Activated B cell treated with CpG ODN at 0.5 μM for 24 hours (primary cell): ENCODE measurements at regions of chr1 and their contacts with region 1.

Region 1: DNA sequence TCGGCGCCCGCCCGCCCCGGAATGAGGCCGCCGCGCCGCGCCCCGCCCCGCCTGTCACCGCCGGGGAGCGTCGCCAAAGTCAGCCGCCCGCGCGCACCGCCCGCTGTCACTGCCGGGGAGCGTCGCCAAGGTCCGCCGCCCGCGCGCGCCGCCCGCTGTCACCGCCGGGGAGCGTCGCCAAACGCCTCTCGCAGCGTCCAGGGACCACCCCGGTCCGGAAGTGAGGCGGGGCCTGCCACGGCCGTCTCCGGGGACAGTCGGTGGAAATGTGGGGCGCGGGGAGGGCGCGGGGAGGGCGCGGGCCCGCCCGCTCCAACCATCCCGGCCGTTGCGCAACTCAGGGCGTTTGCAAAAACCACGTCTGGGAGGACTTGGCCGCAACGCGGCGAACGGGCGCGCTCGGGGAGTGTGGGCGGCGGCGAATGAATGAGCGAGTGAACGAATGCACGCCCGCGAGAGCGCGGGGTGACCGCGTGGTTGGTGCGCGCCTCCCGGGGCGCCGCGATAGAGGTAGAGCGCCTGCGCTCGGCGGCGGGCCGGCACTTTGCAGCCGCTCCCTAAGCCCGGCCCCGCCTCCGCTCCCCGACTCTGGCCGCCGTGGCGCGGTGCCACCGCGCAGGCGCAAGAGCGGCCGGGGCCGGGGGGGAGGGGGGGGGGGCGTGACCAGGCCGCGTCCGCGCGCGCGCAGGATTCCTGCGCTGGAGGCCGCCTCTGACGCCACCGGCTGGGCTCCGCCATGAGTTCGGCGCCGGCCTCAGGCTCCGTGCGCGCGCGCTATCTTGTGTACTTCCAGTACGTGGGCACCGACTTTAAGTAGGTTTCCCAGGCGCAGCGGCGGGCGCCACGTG is at the starts of genes ACAP3 and PUSL1:
- DNase-seq: peak; percentile 88
- ATAC-seq: peak; percentile 68
- H3K4me3 Mint-ChIP-seq: peak within 1 kb of the TSS; percentile 86
- H3K27ac Mint-ChIP-seq: peak within 1 kb of the TSS; percentile 87
- H3K4me1 Mint-ChIP-seq: peaks cover 38% of the 10 kb centered on the region
- H3K27me3 Mint-ChIP-seq: no peaks in the 10 kb centered on the region
- CTCF ChIP-seq: no peak
- total RNA-seq, gene ACAP3: 16.2 and 26.1 TPM in 2 replicates
- total RNA-seq, gene PUSL1: 11.9 and 12.6 TPM in 2 replicates

Region 2: DNA sequence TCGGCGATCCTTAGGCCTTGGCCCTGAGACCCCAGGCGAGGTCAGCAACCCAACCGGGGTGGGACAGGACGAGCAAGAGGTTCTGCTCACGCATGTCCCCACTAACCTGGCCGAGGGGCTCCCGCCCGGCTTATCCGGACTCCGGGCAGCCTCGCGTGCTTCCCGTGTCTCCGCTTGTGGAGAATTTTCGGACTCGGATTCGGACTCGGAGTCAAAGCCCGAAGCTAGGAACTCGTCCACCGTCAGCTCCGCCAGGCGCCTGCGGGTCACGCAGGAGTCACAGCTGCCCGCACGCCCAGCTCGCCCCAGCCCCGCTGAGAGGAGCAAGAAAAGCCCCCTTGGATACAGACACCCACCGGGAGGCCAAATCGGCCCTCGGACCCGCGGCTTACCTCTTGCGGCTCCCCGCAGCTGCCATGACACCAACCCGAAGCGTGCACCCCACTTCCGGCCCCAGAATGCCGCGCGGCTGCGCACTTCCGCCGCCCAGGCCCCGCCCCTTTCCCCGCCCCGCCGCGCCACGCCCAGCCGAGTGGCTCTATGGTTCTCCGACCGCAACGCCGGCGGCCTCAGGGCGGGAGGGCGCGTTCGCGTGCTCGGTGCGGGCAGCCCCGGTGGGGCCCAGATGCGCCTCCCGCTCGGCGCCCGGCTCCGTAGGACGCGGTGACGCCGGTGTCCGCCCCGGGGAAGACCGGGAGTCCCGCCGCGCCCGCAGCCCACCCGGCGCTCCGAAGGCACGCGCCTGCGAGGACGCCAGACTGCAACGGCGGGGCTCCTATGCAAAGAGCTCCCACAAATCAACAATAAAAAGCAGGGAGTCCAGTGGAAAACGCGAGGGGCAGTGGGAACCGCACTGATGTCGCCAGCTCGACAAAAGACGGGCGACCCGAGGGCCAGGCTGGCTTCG is 349.1 kb before region 1 on chr1 and contains the start of gene NOC2L:
- CTCF ChIA-PET with region 1: no interaction called
- POLR2A ChIA-PET with region 1: no interaction called
- intact Hi-C with region 1: loop called (anchors 1 kb)
- DNase-seq: peak; percentile 95
- ATAC-seq: peak; percentile 90
- H3K4me3 Mint-ChIP-seq: peak within 1 kb of the TSS; percentile 89
- H3K27ac Mint-ChIP-seq: peak within 1 kb of the TSS; percentile 56
- H3K4me1 Mint-ChIP-seq: peaks cover 28% of the 10 kb centered on the region
- H3K27me3 Mint-ChIP-seq: no peaks in the 10 kb centered on the region
- CTCF ChIP-seq: no peak
- total RNA-seq, gene NOC2L: 95.5 and 96.8 TPM in 2 replicates

Region 3: DNA sequence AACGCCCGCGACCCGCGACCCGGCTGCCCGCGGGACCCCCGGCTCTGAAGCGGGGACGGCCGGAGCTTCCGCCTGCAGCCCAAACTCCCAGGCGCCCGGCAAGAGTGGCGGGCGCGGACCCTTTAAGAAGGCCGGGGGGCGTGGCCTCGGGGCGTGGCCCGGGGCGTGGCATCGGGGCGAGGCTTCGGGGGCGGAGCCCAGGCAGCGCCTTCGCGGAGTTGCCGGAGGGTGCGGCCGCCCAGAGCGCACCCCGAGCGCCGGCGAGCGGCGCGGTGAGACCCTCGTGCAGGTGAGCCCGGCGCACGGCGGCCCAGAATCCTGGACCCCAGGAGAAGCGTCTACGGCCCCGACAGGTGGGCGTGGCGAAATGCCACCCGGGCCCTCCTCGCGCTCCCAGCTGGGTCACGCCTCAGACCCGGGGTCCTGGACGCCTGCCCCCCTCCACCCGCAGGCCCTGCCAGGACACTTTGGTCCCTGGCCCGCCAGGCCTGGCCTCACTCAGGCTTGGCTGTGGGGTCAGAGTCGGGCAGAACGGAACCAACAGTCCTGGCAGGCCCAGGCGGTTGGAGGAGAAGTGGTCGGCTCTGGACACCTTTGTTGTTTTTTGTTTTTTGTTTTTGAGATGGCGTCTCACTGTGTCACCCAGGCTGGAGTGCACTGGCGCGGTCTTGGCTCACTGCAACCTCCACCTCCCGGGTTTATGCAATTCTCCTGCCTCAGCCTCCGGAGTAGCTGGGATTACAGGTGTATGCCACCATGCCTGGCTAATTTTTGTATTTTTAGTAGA is 248.4 kb before region 1 on chr1:
- CTCF ChIA-PET with region 1: no interaction called
- POLR2A ChIA-PET with region 1: interaction called, 4 read pairs
- intact Hi-C with region 1: loop called (anchors 5 kb)
- DNase-seq: peak; percentile 97
- ATAC-seq: peak; percentile 59
- H3K4me3 Mint-ChIP-seq: peak overlapping the region; percentile 74
- H3K27ac Mint-ChIP-seq: peak overlapping the region; percentile 12
- H3K4me1 Mint-ChIP-seq: peaks cover 43% of the 10 kb centered on the region
- H3K27me3 Mint-ChIP-seq: peaks cover 18% of the 10 kb centered on the region
- CTCF ChIP-seq: no peak

Region 4: GRCh38 chr1:1231400-1232223 is 76.5 kb before region 1 on chr1 and contains the start of gene SDF4:
- CTCF ChIA-PET with region 1: no interaction called
- POLR2A ChIA-PET with region 1: no interaction called
- intact Hi-C with region 1: loop called (anchors 1 kb)
- DNase-seq: peak; percentile 91
- ATAC-seq: peak; percentile 94
- H3K4me3 Mint-ChIP-seq: peak within 1 kb of the TSS; percentile 92
- H3K27ac Mint-ChIP-seq: peak within 1 kb of the TSS; percentile 83
- H3K4me1 Mint-ChIP-seq: peaks cover 35% of the 10 kb centered on the region
- H3K27me3 Mint-ChIP-seq: no peaks in the 10 kb centered on the region
- CTCF ChIP-seq: no peak
- total RNA-seq, gene SDF4: 94.4 and 97.9 TPM in 2 replicates

Region 5: DNA sequence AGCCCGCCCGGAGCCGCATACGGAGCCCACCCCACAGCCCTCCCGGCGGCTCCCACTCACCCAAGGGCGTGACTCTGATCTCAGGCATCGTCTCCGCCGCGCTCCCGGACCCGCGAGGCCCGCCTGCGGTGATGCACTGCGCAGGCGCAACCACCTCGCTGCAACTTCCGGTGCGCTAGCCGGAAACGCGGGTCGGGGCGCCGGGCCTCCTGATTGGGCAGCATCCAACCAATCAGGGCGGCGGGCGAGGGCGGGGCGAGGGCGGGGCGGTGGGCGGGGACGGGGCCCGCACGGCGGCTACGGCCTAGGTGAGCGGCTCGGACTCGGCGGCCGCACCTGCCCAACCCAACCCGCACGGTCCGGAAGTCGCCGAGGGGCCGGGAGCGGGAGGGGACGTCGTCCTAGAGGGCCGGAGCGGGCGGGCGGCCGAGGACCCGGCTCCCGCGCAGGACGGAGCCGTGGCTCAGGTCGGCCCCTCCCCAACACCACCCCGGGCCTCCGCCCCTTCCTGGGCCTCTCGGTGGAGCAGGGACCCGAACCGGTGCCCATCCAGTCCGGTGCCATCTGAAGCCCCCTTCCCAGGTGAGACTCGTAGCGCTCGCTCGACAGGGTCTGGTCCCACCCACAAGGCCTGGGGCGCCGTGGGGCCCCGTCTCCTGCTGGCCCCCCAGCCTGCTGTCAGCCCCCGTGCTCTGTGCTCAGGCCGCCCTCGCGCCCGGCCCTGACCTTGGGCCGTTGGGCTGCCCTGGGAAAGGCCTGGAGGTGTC is 16.6 kb after region 1 on chr1 and contains the starts of genes CPTP and INTS11:
- CTCF ChIA-PET with region 1: no interaction called
- POLR2A ChIA-PET with region 1: no interaction called
- intact Hi-C with region 1: loop called (anchors 1 kb)
- DNase-seq: peak; percentile 91
- ATAC-seq: peak; percentile 87
- H3K4me3 Mint-ChIP-seq: peak within 1 kb of the TSS; percentile 90
- H3K27ac Mint-ChIP-seq: peak within 1 kb of the TSS; percentile 80
- H3K4me1 Mint-ChIP-seq: peaks cover 41% of the 10 kb centered on the region
- H3K27me3 Mint-ChIP-seq: no peaks in the 10 kb centered on the region
- CTCF ChIP-seq: no peak
- total RNA-seq, gene CPTP: 13.8 and 15.3 TPM in 2 replicates
- total RNA-seq, gene INTS11: 131 and 151 TPM in 2 replicates

Region 6: DNA sequence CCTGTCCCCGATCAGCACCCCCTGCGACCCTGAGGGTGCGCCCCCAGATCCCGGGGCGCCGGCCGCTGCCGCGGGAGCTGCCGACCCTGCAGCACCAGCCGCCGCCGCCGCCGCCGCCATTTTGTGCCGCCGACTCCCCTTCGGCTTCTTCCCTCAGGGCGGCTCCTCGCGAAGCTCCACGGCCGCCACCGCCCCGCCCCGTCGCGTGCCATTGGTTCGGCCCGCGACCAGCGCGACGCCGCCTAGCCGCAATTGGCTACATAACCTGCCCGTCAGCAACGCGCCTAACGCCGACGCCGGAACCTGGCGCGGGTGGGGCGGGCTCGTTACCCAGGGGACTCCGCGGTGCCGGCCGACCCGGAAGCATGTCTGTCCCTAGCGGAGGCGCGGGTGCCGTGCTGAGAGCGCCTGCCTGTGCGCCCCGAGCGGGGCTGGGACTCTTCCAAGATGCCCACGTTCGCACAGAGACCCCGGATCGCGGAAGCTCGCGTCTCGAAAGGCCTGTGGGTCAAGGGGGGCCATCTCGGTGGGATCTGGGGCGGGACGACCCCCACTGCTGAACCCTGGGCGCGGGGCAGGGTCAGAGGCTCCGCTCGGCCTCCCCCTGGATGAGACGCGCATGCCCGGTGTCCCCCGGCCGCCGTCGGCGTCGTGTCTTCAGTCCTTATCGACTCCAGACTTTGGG is 91.2 kb after region 1 on chr1 and contains the start of gene CCNL2:
- CTCF ChIA-PET with region 1: no interaction called
- POLR2A ChIA-PET with region 1: no interaction called
- intact Hi-C with region 1: loop called (anchors 1 kb)
- DNase-seq: peak; percentile 98
- ATAC-seq: peak; percentile 96
- H3K4me3 Mint-ChIP-seq: peak within 1 kb of the TSS; percentile 92
- H3K27ac Mint-ChIP-seq: peak within 1 kb of the TSS; percentile 86
- H3K4me1 Mint-ChIP-seq: peaks cover 55% of the 10 kb centered on the region
- H3K27me3 Mint-ChIP-seq: no peaks in the 10 kb centered on the region
- CTCF ChIP-seq: no peak
- total RNA-seq, gene CCNL2: 188 and 225 TPM in 2 replicates

Region 7: GRCh38 chr1:1471389-1472052 is 163.4 kb after region 1 on chr1 and contains the start of gene ATAD3B:
- CTCF ChIA-PET with region 1: no interaction called
- POLR2A ChIA-PET with region 1: no interaction called
- intact Hi-C with region 1: no loop called
- DNase-seq: peak; percentile 84
- ATAC-seq: peak; percentile 95
- H3K4me3 Mint-ChIP-seq: peak within 1 kb of the TSS; percentile 90
- H3K27ac Mint-ChIP-seq: peak within 1 kb of the TSS; percentile 82
- H3K4me1 Mint-ChIP-seq: peaks cover 25% of the 10 kb centered on the region
- H3K27me3 Mint-ChIP-seq: no peaks in the 10 kb centered on the region
- CTCF ChIP-seq: no peak
- total RNA-seq, gene ATAD3B: 47.4 and 49.5 TPM in 2 replicates

Region 8: GRCh38 chr1:1540090-1540817 is 232.1 kb after region 1 on chr1 and contains the start of gene TMEM240:
- CTCF ChIA-PET with region 1: no interaction called
- POLR2A ChIA-PET with region 1: no interaction called
- intact Hi-C with region 1: no loop called
- DNase-seq: no peak
- ATAC-seq: peak; percentile 81
- H3K4me3 Mint-ChIP-seq: peak within 1 kb of the TSS; percentile 72
- H3K27ac Mint-ChIP-seq: no peak within 1 kb of the TSS
- H3K4me1 Mint-ChIP-seq: peaks cover 4% of the 10 kb centered on the region
- H3K27me3 Mint-ChIP-seq: peaks cover 2% of the 10 kb centered on the region
- CTCF ChIP-seq: no peak
- total RNA-seq, gene TMEM240: 0.31 TPM in 1 of 2 replicates, not detected in the other

Region 9: GRCh38 chr1:1826356-1827088 is 518.4 kb after region 1 on chr1:
- CTCF ChIA-PET with region 1: no interaction called
- POLR2A ChIA-PET with region 1: no interaction called
- intact Hi-C with region 1: no loop called
- DNase-seq: no peak
- ATAC-seq: no peak
- H3K4me3 Mint-ChIP-seq: no peak overlapping the region
- H3K27ac Mint-ChIP-seq: no peak overlapping the region
- H3K4me1 Mint-ChIP-seq: peaks cover 41% of the 10 kb centered on the region
- H3K27me3 Mint-ChIP-seq: no peaks in the 10 kb centered on the region
- CTCF ChIP-seq: no peak